ENCODE measurements at regions of chr16 and their contacts with region 1.

Region 1: GRCh38 chr16:85610508-85611332 is 2.4 kb upstream of the GSE1 start:
- DNase-seq: peak; percentile 82
- ATAC-seq: peak; percentile 53
- H3K4me3 ChIP-seq: peak overlapping the region; percentile 70 to 82 (median 76)
- H3K27ac ChIP-seq: peak overlapping the region; percentile 84
- H3K4me1 ChIP-seq: peaks cover 25% of the 10 kb centered on the region
- H3K27me3 ChIP-seq: no peaks in the 10 kb centered on the region
- CTCF ChIP-seq: peak; percentile 97
- EP300 ChIP-seq: 0 out of 4 replicates have a peak, but pooled peaks have one; percentile 3 to 31
- POLR2A ChIP-seq: no peak
- RAD21 ChIP-seq: peak; percentile 99

Region 2: GRCh38 chr16:85258629-85259028 is 352.1 kb before region 1 on chr16:
- CTCF ChIA-PET with region 1: no interaction called
- POLR2A ChIA-PET with region 1: no interaction called
- in situ Hi-C with region 1: no loop called
- intact Hi-C with region 1: no loop called
- DNase-seq: no peak
- ATAC-seq: no peak
- H3K4me3 ChIP-seq: no peak overlapping the region
- H3K27ac ChIP-seq: no peak overlapping the region
- H3K4me1 ChIP-seq: peaks cover 1% of the 10 kb centered on the region
- H3K27me3 ChIP-seq: 0 out of 5 replicates have a peak, but pooled peaks cover 0 to 1% of the 10 kb centered on the region in 2 experiments
- CTCF ChIP-seq: no peak
- EP300 ChIP-seq: no peak
- POLR2A ChIP-seq: no peak
- RAD21 ChIP-seq: no peak

Region 3: GRCh38 chr16:85393674-85394483 is 216.8 kb before region 1 on chr16:
- CTCF ChIA-PET with region 1: interaction called, 7 read pairs
- POLR2A ChIA-PET with region 1: interaction called, 3 read pairs
- in situ Hi-C with region 1: no loop called
- intact Hi-C with region 1: loop called (anchors 10 kb)
- DNase-seq: no peak
- ATAC-seq: peak; percentile 66
- H3K4me3 ChIP-seq: no peak overlapping the region
- H3K27ac ChIP-seq: no peak overlapping the region
- H3K4me1 ChIP-seq: peaks cover 50% of the 10 kb centered on the region
- H3K27me3 ChIP-seq: peaks cover 12 to 30% of the 10 kb centered on the region in 2 experiments; a peak in 4 of 5 replicates
- CTCF ChIP-seq: peak; percentile 95
- EP300 ChIP-seq: no peak
- POLR2A ChIP-seq: no peak
- RAD21 ChIP-seq: peak; percentile 85

Region 4: DNA sequence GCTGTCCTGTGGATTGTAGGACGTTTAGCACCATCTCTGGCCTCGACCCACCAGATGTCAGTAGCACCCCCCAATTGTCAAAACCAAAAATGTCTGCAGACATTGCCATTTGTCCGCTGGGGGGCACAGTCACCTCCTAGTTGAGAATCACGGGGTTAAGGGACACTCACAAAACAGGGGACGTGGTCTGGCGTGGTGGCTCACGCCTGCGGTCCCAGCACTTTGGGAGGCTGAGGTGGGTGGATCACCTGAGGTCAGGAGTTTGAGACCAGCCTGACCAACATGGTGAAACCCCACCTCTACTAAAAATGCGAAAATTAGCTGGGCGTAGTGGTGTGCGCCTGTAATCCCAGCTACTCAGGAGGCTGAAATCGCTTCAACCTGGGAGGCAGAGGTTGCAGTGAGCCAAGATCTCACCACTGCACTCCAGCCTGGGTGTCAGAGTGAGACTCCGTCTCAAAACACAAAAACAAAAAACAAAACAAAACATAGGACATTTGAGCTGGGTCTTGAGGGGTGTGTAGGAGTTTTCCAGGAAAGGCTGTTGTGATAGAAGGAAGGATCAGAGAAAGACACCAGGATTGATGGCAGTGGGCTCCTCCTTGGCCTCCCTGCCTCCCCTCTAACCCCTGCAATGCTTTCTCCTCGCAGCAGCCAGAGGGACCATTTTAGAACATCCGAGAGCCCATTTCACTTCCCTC is 169.4 kb before region 1 on chr16:
- CTCF ChIA-PET with region 1: interaction called, 12 read pairs
- POLR2A ChIA-PET with region 1: no interaction called
- in situ Hi-C with region 1: loop called (anchors 5 kb)
- intact Hi-C with region 1: loop called (anchors 1 kb)
- DNase-seq: peak; percentile 71
- ATAC-seq: peak; percentile 8; the same call in 2 of the 3 replicates
- H3K4me3 ChIP-seq: no peak overlapping the region
- H3K27ac ChIP-seq: no peak overlapping the region
- H3K4me1 ChIP-seq: peaks cover 63% of the 10 kb centered on the region
- H3K27me3 ChIP-seq: peaks cover 8 to 44% of the 10 kb centered on the region in 2 experiments; a peak in 4 of 5 replicates
- CTCF ChIP-seq: peak; percentile 85
- EP300 ChIP-seq: no peak
- POLR2A ChIP-seq: no peak
- RAD21 ChIP-seq: peak; percentile 89

Region 5: GRCh38 chr16:85491058-85491771 is 119.5 kb before region 1 on chr16:
- CTCF ChIA-PET with region 1: interaction called, 14 read pairs
- POLR2A ChIA-PET with region 1: interaction called, 4 read pairs
- in situ Hi-C with region 1: no loop called
- intact Hi-C with region 1: loop called (anchors 1 kb)
- DNase-seq: peak; percentile 53
- ATAC-seq: peak; percentile 62
- H3K4me3 ChIP-seq: peak overlapping the region in 2 of 3 experiments; percentile 20 to 61; a peak in 2 of 6 replicates
- H3K27ac ChIP-seq: no peak overlapping the region
- H3K4me1 ChIP-seq: peaks cover 32% of the 10 kb centered on the region
- H3K27me3 ChIP-seq: peaks cover 0 to 2% of the 10 kb centered on the region in 2 experiments; a peak in 1 of 5 replicates
- CTCF ChIP-seq: peak; percentile 95
- EP300 ChIP-seq: no peak
- POLR2A ChIP-seq: no peak
- RAD21 ChIP-seq: peak; percentile 90

Region 6: GRCh38 chr16:85528528-85529387 is 82.0 kb before region 1 on chr16:
- CTCF ChIA-PET with region 1: no interaction called
- POLR2A ChIA-PET with region 1: interaction called, 14 read pairs
- in situ Hi-C with region 1: no loop called
- intact Hi-C with region 1: loop called (anchors 10 kb)
- DNase-seq: no peak
- ATAC-seq: no peak
- H3K4me3 ChIP-seq: no peak overlapping the region
- H3K27ac ChIP-seq: no peak overlapping the region
- H3K4me1 ChIP-seq: peaks cover 99% of the 10 kb centered on the region
- H3K27me3 ChIP-seq: no peaks in the 10 kb centered on the region
- CTCF ChIP-seq: peak; percentile 72
- EP300 ChIP-seq: no peak
- POLR2A ChIP-seq: no peak
- RAD21 ChIP-seq: 0 out of 2 replicates have a peak, but pooled peaks have one; percentile 39

Region 7: GRCh38 chr16:85554112-85554813 is 56.5 kb before region 1 on chr16:
- CTCF ChIA-PET with region 1: no interaction called
- POLR2A ChIA-PET with region 1: interaction called, 23 read pairs
- in situ Hi-C with region 1: no loop called
- intact Hi-C with region 1: loop called (anchors 2 kb)
- DNase-seq: peak; percentile 56
- ATAC-seq: peak; percentile 26
- H3K4me3 ChIP-seq: peak overlapping the region; percentile 75 to 82 (median 81)
- H3K27ac ChIP-seq: peak overlapping the region; percentile 80
- H3K4me1 ChIP-seq: peaks cover 60% of the 10 kb centered on the region
- H3K27me3 ChIP-seq: no peaks in the 10 kb centered on the region
- CTCF ChIP-seq: no peak
- EP300 ChIP-seq: peak in 1 of 2 experiments; percentile 7; a peak in 1 of 4 replicates
- POLR2A ChIP-seq: peak; percentile 36 to 48; a peak in 2 of 4 replicates
- RAD21 ChIP-seq: no peak

Region 8: GRCh38 chr16:85583491-85584181 is 27.1 kb before region 1 on chr16:
- CTCF ChIA-PET with region 1: no interaction called
- POLR2A ChIA-PET with region 1: no interaction called
- in situ Hi-C with region 1: no loop called
- intact Hi-C with region 1: no loop called
- DNase-seq: no peak
- ATAC-seq: no peak
- H3K4me3 ChIP-seq: no peak overlapping the region
- H3K27ac ChIP-seq: no peak overlapping the region
- H3K4me1 ChIP-seq: peaks cover 14% of the 10 kb centered on the region
- H3K27me3 ChIP-seq: no peaks in the 10 kb centered on the region
- CTCF ChIP-seq: no peak
- EP300 ChIP-seq: no peak
- POLR2A ChIP-seq: no peak
- RAD21 ChIP-seq: no peak

Measured in HepG2 (cell line).